Esophagus muscularis mucosa (tissue), 4 donors: ENCODE measurements at regions of chr1 and their contacts with region 1.

Region 1: GRCh38 chr1:55284852-55285251 is 69.7 kb upstream of the USP24 start:
- DNase-seq: no peak
- H3K4me3 ChIP-seq: no peak overlapping the region
- H3K27ac ChIP-seq: no peak overlapping the region
- H3K4me1 ChIP-seq: peaks cover 0 to 6% (median 2%) of the 10 kb centered on the region in 4 donors
- H3K27me3 ChIP-seq: no peaks in the 10 kb centered on the region
- CTCF ChIP-seq: peak; percentile 60 to 73 (median 63)
- EP300 ChIP-seq: no peak
- POLR2A ChIP-seq: no peak

Region 2: GRCh38 chr1:55127827-55128343 is 157.0 kb before region 1 on chr1:
- intact Hi-C with region 1: no loop called
- DNase-seq: no peak
- H3K4me3 ChIP-seq: no peak overlapping the region
- H3K27ac ChIP-seq: no peak overlapping the region
- H3K4me1 ChIP-seq: peaks cover 0 to 17% (median 0%) of the 10 kb centered on the region in 4 donors
- H3K27me3 ChIP-seq: no peaks in the 10 kb centered on the region
- CTCF ChIP-seq: no peak
- EP300 ChIP-seq: no peak
- POLR2A ChIP-seq: no peak

Region 3: GRCh38 chr1:56584910-56585528 is 1300.2 kb after region 1 on chr1:
- intact Hi-C with region 1: loop called (anchors 2 kb)
- DNase-seq: no peak
- H3K4me3 ChIP-seq: no peak overlapping the region
- H3K27ac ChIP-seq: no peak overlapping the region
- H3K4me1 ChIP-seq: peaks cover 2 to 13% (median 5%) of the 10 kb centered on the region in 4 donors
- H3K27me3 ChIP-seq: no peaks in the 10 kb centered on the region
- CTCF ChIP-seq: peak; percentile 89 to 93 (median 90)
- EP300 ChIP-seq: no peak
- POLR2A ChIP-seq: no peak

Region 4: GRCh38 chr1:56709269-56709880 is 1424.5 kb after region 1 on chr1:
- intact Hi-C with region 1: loop called (anchors 2 kb)
- DNase-seq: no peak
- H3K4me3 ChIP-seq: no peak overlapping the region
- H3K27ac ChIP-seq: no peak overlapping the region
- H3K4me1 ChIP-seq: peaks cover 0 to 32% (median 18%) of the 10 kb centered on the region in 4 donors
- H3K27me3 ChIP-seq: no peaks in the 10 kb centered on the region
- CTCF ChIP-seq: peak; percentile 56 to 67 (median 62)
- EP300 ChIP-seq: no peak
- POLR2A ChIP-seq: no peak

Region 5: GRCh38 chr1:56811331-56811730 is 1526.5 kb after region 1 on chr1:
- intact Hi-C with region 1: loop called (anchors 5 kb)
- DNase-seq: no peak
- H3K4me3 ChIP-seq: no peak overlapping the region
- H3K27ac ChIP-seq: no peak overlapping the region
- H3K4me1 ChIP-seq: no peaks in the 10 kb centered on the region
- H3K27me3 ChIP-seq: peaks cover 0 to 3% (median 0%) of the 10 kb centered on the region in 4 donors
- CTCF ChIP-seq: no peak
- EP300 ChIP-seq: no peak
- POLR2A ChIP-seq: no peak

Region 6: GRCh38 chr1:56821140-56821797 is 1536.4 kb after region 1 on chr1:
- intact Hi-C with region 1: loop called (anchors 2 kb)
- DNase-seq: no peak
- H3K4me3 ChIP-seq: no peak overlapping the region
- H3K27ac ChIP-seq: no peak overlapping the region
- H3K4me1 ChIP-seq: peaks cover 6 to 12% (median 10%) of the 10 kb centered on the region in 4 donors
- H3K27me3 ChIP-seq: no peaks in the 10 kb centered on the region
- CTCF ChIP-seq: peak; percentile 83 to 96 (median 84)
- EP300 ChIP-seq: no peak
- POLR2A ChIP-seq: no peak